Ascending aorta (tissue), 2 donors: ENCODE measurements at regions of chrX and their contacts with region 1.

Region 1: DNA sequence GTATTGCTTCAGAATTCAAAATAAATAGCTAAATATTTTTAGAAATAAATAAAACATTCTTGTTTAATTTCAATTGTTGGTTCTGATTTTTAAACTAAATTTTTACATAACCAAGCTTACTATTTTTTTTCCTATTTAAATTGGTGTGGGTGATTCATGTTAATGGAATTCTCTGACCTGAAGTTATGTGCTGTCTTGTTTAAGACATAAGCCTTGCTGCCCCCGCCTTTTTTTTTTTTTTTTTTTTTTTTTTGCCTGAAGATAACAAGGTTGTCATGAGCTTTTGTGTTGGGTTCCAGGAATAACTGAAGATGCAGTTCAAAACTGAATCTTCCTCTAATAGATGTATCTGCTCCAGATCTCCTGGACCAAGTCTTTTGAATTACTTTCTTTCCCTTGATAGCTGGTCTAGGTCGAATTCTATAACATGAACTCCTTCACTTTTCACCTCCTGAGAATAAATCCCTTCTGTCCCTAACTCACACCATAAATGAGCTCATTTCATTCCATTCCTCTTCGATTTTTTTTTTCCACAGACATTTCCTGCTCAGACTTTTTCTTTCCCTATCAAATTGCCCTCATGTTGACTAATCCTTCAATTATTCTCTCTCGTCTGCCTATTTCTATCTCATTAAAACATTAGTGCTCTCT is 261.5 kb upstream of the FTHL17 start:
- DNase-seq: no peak
- H3K4me3 ChIP-seq: no peak overlapping the region
- H3K27ac ChIP-seq: no peak overlapping the region
- H3K4me1 ChIP-seq: no peaks in the 10 kb centered on the region
- H3K27me3 ChIP-seq: no peaks in the 10 kb centered on the region
- CTCF ChIP-seq: no peak

Region 2: DNA sequence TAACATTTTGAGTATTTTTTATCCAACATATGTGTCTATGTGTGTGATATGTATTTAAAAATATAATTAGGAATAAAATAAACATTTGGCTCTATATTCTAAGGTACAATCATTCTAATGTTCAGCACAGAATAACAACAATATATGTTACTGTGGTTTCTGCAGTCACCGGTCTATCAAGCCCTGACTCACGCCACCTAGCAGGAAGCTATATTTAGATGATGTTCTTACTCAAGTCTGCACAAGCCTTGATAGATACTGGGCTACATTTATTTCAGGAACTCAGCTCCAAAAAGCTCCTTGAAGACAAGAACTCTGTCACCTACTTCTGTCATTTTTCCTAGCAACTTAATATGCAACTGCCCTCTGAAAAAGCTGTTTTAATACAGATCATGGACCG is 109.5 kb before region 1 on chrX:
- intact Hi-C with region 1: loop called (anchors 10 kb)
- DNase-seq: no peak
- H3K4me3 ChIP-seq: no peak overlapping the region
- H3K27ac ChIP-seq: no peak overlapping the region
- H3K4me1 ChIP-seq: no peaks in the 10 kb centered on the region
- H3K27me3 ChIP-seq: no peaks in the 10 kb centered on the region
- CTCF ChIP-seq: no peak